Endothelial cell of umbilical vein (primary cell): ENCODE measurements at regions of chr10 and their contacts with region 1.

Region 1: DNA sequence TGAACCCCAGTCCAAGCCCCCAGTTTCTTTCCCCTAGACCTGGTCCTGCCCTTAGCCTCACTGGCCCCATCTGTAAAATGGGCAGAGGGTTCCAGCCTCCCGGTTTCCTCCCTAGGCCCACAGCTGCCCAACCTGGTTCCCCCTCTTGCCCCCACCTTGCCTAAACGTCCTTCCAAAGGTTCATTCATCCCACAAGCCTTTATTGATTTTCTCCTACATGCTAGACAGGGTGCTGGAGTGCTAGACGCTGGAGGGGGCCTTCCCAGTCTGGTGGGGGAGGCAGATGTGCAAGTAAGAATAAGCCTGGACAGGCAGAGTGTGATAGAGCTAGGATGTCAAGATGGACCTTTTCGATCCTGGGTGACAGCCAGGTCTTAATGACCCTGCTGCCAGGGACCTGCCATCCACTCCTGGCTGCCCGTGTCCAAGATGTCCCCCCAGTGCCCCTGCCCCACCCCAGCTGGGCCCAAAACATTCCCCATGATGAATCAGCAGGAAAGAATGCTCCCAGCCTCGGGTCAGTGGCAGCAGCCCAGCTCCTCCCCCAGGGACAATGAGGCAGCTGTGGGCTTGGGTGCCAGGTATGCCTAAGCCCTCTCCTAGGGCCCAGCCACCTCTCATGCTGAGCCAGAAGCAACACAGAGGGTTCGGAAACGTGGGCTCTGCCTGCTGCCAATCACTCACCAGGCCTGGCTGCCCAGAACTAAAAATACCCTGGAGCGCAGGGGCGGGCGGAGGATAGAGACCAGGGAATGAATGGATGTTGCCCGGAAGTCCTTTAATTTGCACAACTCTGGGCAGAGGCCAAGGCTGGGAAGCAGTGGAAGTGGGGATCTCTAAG is 1.3 kb upstream of the LOXL4 start:
- DNase-seq: peak; percentile 43
- H3K4me3 ChIP-seq: no peak overlapping the region
- H3K27ac ChIP-seq: peak overlapping the region; percentile 15
- H3K4me1 ChIP-seq: peaks cover 17% of the 10 kb centered on the region
- H3K27me3 ChIP-seq: no peaks in the 10 kb centered on the region
- CTCF ChIP-seq: no peak
- POLR2A ChIP-seq: no peak

Region 2: DNA sequence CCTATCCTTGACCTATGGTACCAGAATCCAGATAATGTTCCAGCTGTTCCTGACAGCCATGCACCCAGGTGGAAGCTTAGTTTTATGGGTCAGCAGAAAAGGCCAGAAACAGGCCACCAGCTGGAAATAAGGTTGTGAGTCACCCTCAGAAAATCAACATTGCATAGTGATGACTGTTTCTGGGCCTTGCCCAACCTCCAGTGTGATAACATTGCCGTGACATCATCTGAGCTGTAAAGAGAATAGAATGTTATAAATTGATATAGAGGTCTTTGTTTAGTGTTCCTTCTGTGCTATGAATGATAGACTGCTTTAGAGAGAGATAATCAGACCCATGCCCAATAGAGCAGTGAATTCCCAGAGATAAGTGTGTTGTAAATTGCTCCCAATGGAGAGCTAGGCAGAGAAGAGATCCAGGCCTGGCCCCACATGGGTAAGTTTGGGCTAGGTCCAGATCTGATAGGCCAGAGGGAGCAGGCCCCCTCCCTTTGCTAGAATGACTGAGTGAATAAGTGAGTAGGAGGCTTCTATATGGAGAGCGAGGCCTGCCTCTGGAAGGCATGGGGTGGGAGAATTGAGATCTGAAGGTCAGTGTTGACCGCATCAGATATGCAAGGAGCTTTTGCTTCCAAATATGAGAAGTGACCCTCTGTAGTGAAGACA is 191.7 kb after region 1 on chr10:
- CTCF ChIA-PET with region 1: no interaction called
- POLR2A ChIA-PET with region 1: no interaction called
- dilution Hi-C with region 1: no loop called
- intact Hi-C with region 1: loop called (anchors 2 kb)
- DNase-seq: peak; percentile 93
- H3K4me3 ChIP-seq: no peak overlapping the region
- H3K27ac ChIP-seq: peak overlapping the region; percentile 98
- H3K4me1 ChIP-seq: peaks cover 15% of the 10 kb centered on the region
- H3K27me3 ChIP-seq: no peaks in the 10 kb centered on the region
- CTCF ChIP-seq: no peak
- POLR2A ChIP-seq: no peak